Heart left ventricle (tissue), 16 donors: ENCODE measurements at regions of chr6 and their contacts with region 1.

Region 1: GRCh38 chr6:85764844-85765243 is 122.2 kb upstream of the SYNCRIP start:
- DNase-seq: no peak
- ATAC-seq: no peak
- H3K4me3 ChIP-seq: no peak overlapping the region
- H3K27ac ChIP-seq: no peak overlapping the region
- H3K4me1 ChIP-seq: no peaks in the 10 kb centered on the region
- H3K27me3 ChIP-seq: no peaks in the 10 kb centered on the region
- CTCF ChIP-seq: no peak
- POLR2A ChIP-seq: no peak

Region 2: DNA sequence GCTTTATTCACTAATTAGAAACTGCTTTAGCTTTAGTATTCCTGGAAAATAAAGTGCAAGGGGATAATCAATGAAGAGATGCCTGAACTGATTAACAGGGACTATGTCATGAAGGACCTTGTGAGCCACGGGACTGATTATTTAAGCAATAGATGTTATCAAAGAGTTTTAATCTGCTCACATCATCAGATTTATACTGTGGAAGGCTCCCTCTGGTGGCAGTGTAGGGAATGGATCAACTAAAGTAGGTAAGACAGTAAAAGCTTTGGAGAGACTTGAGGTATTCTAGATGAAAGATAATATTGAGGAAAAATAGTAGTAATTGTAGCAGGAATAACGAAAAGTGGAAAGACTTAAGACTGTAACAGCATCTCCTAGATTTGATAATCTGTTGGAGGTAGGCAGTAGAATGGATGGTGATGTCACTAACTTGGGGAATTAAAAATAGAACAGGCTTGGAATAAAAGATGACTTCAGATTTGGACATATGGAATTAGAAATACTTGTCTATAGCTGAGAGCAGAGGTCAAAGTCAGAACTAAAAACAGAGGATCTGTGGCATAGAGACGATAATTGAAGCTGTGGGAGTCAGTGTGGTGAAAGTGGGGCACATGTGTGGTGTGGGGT is 1092.2 kb after region 1 on chr6:
- intact Hi-C with region 1: loop called in 2 of 10 experiments (anchors 10 kb)
- DNase-seq: peak in 1 of 5 donors; percentile 26
- ATAC-seq: no peak
- H3K4me3 ChIP-seq: no peak overlapping the region
- H3K27ac ChIP-seq: no peak overlapping the region
- H3K4me1 ChIP-seq: no peaks in the 10 kb centered on the region
- H3K27me3 ChIP-seq: no peaks in the 10 kb centered on the region
- CTCF ChIP-seq: peak; percentile 49 to 74 (median 62)
- POLR2A ChIP-seq: no peak